Prostate gland (tissue), 2 donors: ENCODE measurements at regions of chr1 and their contacts with region 1.

Region 1: DNA sequence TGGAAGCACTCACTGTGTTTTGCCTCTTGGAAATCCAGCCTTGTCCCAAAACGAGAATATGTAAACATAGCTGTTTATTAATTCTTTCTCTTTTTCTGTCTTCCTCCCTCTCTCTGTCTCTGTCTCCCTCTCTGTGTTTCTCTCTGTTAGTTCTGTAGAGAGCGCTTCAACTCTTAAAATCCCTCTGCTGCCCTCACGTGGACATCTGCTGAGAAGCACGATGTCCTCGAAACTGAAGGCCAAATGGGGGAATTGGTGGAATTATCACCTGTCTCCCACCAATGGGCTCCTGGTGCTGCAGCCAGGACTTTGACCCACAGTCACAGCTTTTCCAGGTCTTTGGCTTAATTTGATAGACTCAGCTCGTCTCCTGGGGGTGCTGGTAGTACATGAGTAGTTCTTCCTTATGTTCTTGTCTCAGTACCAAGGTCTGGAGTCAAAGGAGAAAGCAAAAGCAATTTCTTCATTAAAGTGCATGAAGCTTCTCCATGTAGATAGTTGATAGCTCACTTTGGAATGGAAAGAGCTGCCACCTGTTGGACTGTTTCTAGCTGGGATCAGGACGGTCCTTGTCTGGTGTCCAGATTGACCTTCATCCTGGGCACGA is 5.5 kb upstream of the GBP6 start:
- DNase-seq: peak; percentile 75
- H3K4me3 ChIP-seq: no peak overlapping the region
- H3K27ac ChIP-seq: no peak overlapping the region
- H3K4me1 ChIP-seq: no peaks in the 10 kb centered on the region
- H3K27me3 ChIP-seq: no peaks in the 10 kb centered on the region
- CTCF ChIP-seq: peak; percentile 48 to 80 (median 74)
- POLR2A ChIP-seq: no peak

Region 2: GRCh38 chr1:88998716-88999115 is 359.7 kb before region 1 on chr1:
- intact Hi-C with region 1: loop called (anchors 2 kb)
- DNase-seq: peak; percentile 59
- H3K4me3 ChIP-seq: no peak overlapping the region
- H3K27ac ChIP-seq: no peak overlapping the region
- H3K4me1 ChIP-seq: no peaks in the 10 kb centered on the region
- H3K27me3 ChIP-seq: no peaks in the 10 kb centered on the region
- CTCF ChIP-seq: peak; percentile 34 to 83 (median 76)
- POLR2A ChIP-seq: no peak

Region 3: GRCh38 chr1:89085781-89086180 is 272.6 kb before region 1 on chr1:
- intact Hi-C with region 1: loop called (anchors 10 kb)
- DNase-seq: no peak
- H3K4me3 ChIP-seq: no peak overlapping the region
- H3K27ac ChIP-seq: no peak overlapping the region
- H3K4me1 ChIP-seq: no peaks in the 10 kb centered on the region
- H3K27me3 ChIP-seq: no peaks in the 10 kb centered on the region
- CTCF ChIP-seq: peak in 1 of 4 experiments; percentile 51
- POLR2A ChIP-seq: no peak

Region 4: GRCh38 chr1:89454845-89455521 is 96.6 kb after region 1 on chr1:
- intact Hi-C with region 1: loop called (anchors 10 kb)
- DNase-seq: peak; percentile 36
- H3K4me3 ChIP-seq: no peak overlapping the region
- H3K27ac ChIP-seq: no peak overlapping the region
- H3K4me1 ChIP-seq: no peaks in the 10 kb centered on the region
- H3K27me3 ChIP-seq: no peaks in the 10 kb centered on the region
- CTCF ChIP-seq: peak; percentile 41 to 80 (median 63)
- POLR2A ChIP-seq: no peak

Region 5: DNA sequence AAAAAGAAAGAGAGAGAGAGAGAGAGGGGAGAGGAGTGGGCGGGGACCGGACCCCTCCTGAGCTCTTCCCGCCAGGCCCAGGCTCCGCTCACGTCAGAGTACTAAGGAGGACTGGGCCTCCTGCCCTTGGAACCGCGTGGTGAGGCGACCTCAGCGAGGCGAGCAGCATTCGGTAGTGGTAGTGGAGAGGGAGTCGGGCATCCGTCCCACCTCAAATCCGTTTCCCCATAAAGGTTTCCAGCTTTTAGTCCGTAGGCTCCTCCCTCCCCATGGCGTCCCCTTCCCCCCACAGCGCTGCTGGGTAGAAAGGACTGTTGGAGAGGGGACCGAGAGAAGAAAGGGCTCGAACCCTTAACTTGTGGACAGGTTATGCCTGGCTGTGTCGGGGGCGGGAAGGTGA is 1483.1 kb after region 1 on chr1:
- intact Hi-C with region 1: no loop called
- DNase-seq: no peak
- H3K4me3 ChIP-seq: no peak overlapping the region
- H3K27ac ChIP-seq: no peak overlapping the region
- H3K4me1 ChIP-seq: no peaks in the 10 kb centered on the region
- H3K27me3 ChIP-seq: peaks cover 9% of the 10 kb centered on the region
- CTCF ChIP-seq: no peak
- POLR2A ChIP-seq: no peak